ENCODE measurements at regions of chr2 and their contacts with region 1.

Region 1: GRCh38 chr2:156573710-156574109 is 137.5 kb downstream of the GPD2 start:
- DNase-seq: no peak
- H3K4me3 ChIP-seq: no peak overlapping the region
- H3K27ac ChIP-seq: no peak overlapping the region
- H3K4me1 ChIP-seq: no peaks in the 10 kb centered on the region
- H3K27me3 ChIP-seq: no peaks in the 10 kb centered on the region

Region 2: GRCh38 chr2:156319811-156320485 is 253.8 kb before region 1 on chr2:
- in situ Hi-C with region 1: loop called (anchors 10 kb)
- DNase-seq: peak; percentile 38
- H3K4me3 ChIP-seq: peak overlapping the region; percentile 68
- H3K27ac ChIP-seq: no peak overlapping the region
- H3K4me1 ChIP-seq: no peaks in the 10 kb centered on the region; the same call in 1 of the 2 replicates
- H3K27me3 ChIP-seq: peaks cover 29% of the 10 kb centered on the region; the same call in 1 of the 2 replicates